ENCODE measurements at regions of chr2 and their contacts with region 1.

Region 1: GRCh38 chr2:127415593-127416505 is 2.4 kb upstream of the PROC start:
- DNase-seq: peak in 1 of 2 donors; percentile 76
- H3K4me3 ChIP-seq: peak overlapping the region; percentile 25 to 42
- H3K27ac ChIP-seq: peak overlapping the region; percentile 46 to 98
- H3K4me1 ChIP-seq: peaks cover 0 to 72% (median 49%) of the 10 kb centered on the region in 4 donors
- H3K27me3 ChIP-seq: no peaks in the 10 kb centered on the region
- CTCF ChIP-seq: peak; percentile 35 to 44

Region 2: GRCh38 chr2:127371037-127371436 is 44.8 kb before region 1 on chr2:
- intact Hi-C with region 1: loop called (anchors 5 kb)
- DNase-seq: peak; percentile 75 to 90
- H3K4me3 ChIP-seq: no peak overlapping the region
- H3K27ac ChIP-seq: peak overlapping the region; percentile 52 to 70
- H3K4me1 ChIP-seq: peaks cover 0 to 30% (median 19%) of the 10 kb centered on the region in 4 donors
- H3K27me3 ChIP-seq: no peaks in the 10 kb centered on the region
- CTCF ChIP-seq: peak in 1 of 2 experiments; percentile 32